IMR-90 (cell line): ENCODE measurements at regions of chr11 and their contacts with region 1.

Region 1: GRCh38 chr11:34512840-34513681 is 533 bp downstream of the ELF5 start:
- DNase-seq: peak; percentile 54
- ATAC-seq: peak; percentile 97
- H3K4me3 ChIP-seq: no peak overlapping the region
- H3K27ac ChIP-seq: no peak overlapping the region
- H3K4me1 ChIP-seq: peaks cover 3% of the 10 kb centered on the region; the same call in 1 of the 2 replicates
- H3K27me3 ChIP-seq: peaks cover 13% of the 10 kb centered on the region
- CTCF ChIP-seq: peak; percentile 70
- POLR2A ChIP-seq: no peak
- RAD21 ChIP-seq: peak; percentile 65

Region 2: GRCh38 chr11:34021977-34022735 is 490.9 kb before region 1 on chr11:
- CTCF ChIA-PET with region 1: no interaction called
- POLR2A ChIA-PET with region 1: no interaction called
- dilution Hi-C with region 1: no loop called
- in situ Hi-C with region 1: no loop called
- intact Hi-C with region 1: no loop called
- DNase-seq: no peak
- ATAC-seq: no peak
- H3K4me3 ChIP-seq: no peak overlapping the region
- H3K27ac ChIP-seq: no peak overlapping the region
- H3K4me1 ChIP-seq: no peaks in the 10 kb centered on the region
- H3K27me3 ChIP-seq: peaks cover 1% of the 10 kb centered on the region; the same call in 1 of the 2 replicates
- CTCF ChIP-seq: no peak
- POLR2A ChIP-seq: no peak
- RAD21 ChIP-seq: no peak

Region 3: DNA sequence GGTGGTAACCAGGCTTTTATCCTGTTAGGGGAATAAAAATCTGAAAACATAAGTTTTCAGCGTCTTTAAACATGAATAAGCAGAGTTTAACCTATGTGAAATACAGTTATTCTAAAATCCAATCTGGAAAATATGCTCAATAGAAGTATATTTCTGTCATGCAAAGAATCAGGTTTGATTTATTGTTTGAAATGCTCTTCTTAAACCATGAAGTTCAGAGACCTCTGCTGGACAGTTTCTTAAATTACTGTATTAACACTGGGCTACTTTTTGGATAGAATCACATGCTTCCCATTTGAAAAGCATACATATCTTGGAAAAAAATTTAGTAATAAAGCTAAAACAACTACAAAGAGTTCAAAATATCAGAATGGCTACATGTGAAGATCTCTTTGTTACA is 377.8 kb after region 1 on chr11:
- CTCF ChIA-PET with region 1: interaction called, 3 read pairs
- POLR2A ChIA-PET with region 1: no interaction called
- dilution Hi-C with region 1: no loop called
- in situ Hi-C with region 1: no loop called
- intact Hi-C with region 1: loop called (anchors 1 kb)
- DNase-seq: peak; percentile 55
- ATAC-seq: peak; percentile 48
- H3K4me3 ChIP-seq: no peak overlapping the region
- H3K27ac ChIP-seq: no peak overlapping the region
- H3K4me1 ChIP-seq: no peaks in the 10 kb centered on the region
- H3K27me3 ChIP-seq: no peaks in the 10 kb centered on the region
- CTCF ChIP-seq: peak; percentile 63
- POLR2A ChIP-seq: no peak
- RAD21 ChIP-seq: peak; percentile 77